ENCODE measurements at regions of chr15 and their contacts with region 1.

Region 1: DNA sequence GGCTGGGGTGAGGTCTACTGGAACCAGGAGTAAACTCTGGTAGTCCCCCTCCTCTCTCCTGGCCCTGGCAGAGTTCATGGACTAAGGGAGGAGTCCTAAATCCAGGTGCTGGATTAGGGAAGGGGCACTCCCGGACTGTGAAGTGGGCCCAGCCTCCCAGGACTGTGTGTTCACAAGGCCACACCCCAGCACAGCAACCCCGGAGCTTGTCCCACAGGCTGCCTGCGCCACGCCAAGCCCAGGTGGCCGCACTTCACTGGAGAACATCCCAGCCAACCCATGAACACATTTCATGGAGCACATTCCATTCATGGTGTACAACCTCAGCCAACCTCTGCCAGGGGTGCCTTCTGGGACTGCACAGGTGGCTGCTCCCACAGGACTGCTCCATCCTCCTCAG is 8.2 kb downstream of the ARPIN start:
- DNase-seq: no peak
- H3K4me3 ChIP-seq: no peak overlapping the region
- H3K27ac ChIP-seq: no peak overlapping the region
- H3K4me1 ChIP-seq: no peaks in the 10 kb centered on the region
- H3K27me3 ChIP-seq: no peaks in the 10 kb centered on the region
- CTCF ChIP-seq: no peak
- EP300 ChIP-seq: no peak
- POLR2A ChIP-seq: no peak

Region 2: DNA sequence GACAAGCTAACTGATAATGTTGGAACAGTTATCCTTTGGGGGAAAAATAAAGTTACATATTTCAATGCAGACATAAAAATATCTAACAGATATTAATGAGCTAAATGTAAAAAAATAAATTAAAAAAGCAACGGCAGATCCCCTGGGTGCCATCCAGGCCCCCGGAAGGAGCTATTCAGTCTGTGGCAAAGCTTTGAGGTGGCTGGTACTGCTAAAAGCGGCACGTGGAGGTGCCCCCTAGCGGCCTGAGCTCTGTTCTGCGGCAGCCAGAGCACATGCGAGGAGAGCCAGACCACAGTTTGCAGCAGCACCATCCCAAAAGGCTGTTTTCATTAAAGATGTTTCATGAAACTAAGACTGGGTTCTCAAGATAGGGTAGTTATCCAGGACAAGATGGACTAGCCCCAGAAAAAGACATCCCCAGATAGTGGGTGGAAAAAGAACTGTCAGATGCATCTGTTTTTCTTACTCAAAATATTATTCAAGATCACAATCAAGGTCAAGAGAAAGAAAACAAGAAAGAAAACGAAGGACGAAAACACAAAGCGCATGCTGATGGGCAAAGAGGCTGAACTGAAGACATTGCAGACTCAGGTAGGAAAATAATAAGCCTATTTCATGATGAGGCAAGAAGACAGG is 29.5 kb before region 1 on chr15:
- intact Hi-C with region 1: no loop called
- DNase-seq: peak; percentile 70 to 86 (median 81)
- H3K4me3 ChIP-seq: no peak overlapping the region
- H3K27ac ChIP-seq: no peak overlapping the region
- H3K4me1 ChIP-seq: peaks cover 4% of the 10 kb centered on the region
- H3K27me3 ChIP-seq: no peaks in the 10 kb centered on the region
- CTCF ChIP-seq: peak; percentile 53 to 66 (median 66)
- EP300 ChIP-seq: no peak
- POLR2A ChIP-seq: no peak

Region 3: GRCh38 chr15:90071208-90071807 is 166.8 kb after region 1 on chr15:
- intact Hi-C with region 1: loop called in 3 of 4 experiments (anchors 10 kb)
- DNase-seq: peak; percentile 65 to 81 (median 80)
- H3K4me3 ChIP-seq: no peak overlapping the region
- H3K27ac ChIP-seq: no peak overlapping the region
- H3K4me1 ChIP-seq: no peaks in the 10 kb centered on the region
- H3K27me3 ChIP-seq: no peaks in the 10 kb centered on the region
- CTCF ChIP-seq: peak; percentile 38 to 53 (median 43)
- EP300 ChIP-seq: no peak
- POLR2A ChIP-seq: no peak

Region 4: GRCh38 chr15:90086868-90087268 is 182.3 kb after region 1 on chr15:
- intact Hi-C with region 1: loop called in 1 of 4 experiments (anchors 10 kb)
- DNase-seq: peak in 2 of 5 donors; percentile 55 to 62
- H3K4me3 ChIP-seq: no peak overlapping the region
- H3K27ac ChIP-seq: no peak overlapping the region
- H3K4me1 ChIP-seq: peaks cover 4% of the 10 kb centered on the region
- H3K27me3 ChIP-seq: no peaks in the 10 kb centered on the region
- CTCF ChIP-seq: peak in 2 of 3 donors; percentile 20 to 35
- EP300 ChIP-seq: no peak
- POLR2A ChIP-seq: no peak

Region 5: GRCh38 chr15:90221246-90221900 is 316.9 kb after region 1 on chr15:
- intact Hi-C with region 1: loop called in 2 of 4 experiments (anchors 10 kb)
- DNase-seq: peak; percentile 76 to 87 (median 84)
- H3K4me3 ChIP-seq: no peak overlapping the region
- H3K27ac ChIP-seq: peak overlapping the region in 1 of 2 donors; percentile 39
- H3K4me1 ChIP-seq: no peaks in the 10 kb centered on the region
- H3K27me3 ChIP-seq: no peaks in the 10 kb centered on the region
- CTCF ChIP-seq: peak; percentile 48 to 82 (median 56)
- EP300 ChIP-seq: no peak
- POLR2A ChIP-seq: no peak

Measured in ovary (tissue), 10 donors.